ENCODE measurements at regions of chr19 and their contacts with region 1.

Region 1: DNA sequence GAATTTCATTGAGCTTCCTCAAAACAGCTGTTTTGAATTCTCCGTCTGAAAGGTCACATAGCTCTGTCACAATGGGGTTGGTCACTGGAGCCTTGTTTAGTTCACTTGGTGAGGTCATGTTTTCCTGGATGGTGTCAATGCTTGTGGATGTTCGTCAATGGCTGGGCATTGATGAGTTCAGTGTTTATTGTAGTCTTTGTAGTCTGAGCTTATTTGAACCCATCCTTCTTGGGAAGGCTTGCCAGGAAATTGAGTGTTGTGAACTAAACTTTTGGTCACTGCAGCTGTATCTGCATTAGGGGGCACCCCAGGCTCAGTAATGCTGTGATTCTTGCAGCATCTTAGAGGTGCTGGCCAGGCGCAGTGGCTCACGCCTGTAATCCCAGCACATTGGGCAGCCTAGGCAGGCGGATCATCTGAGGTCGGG is 22.0 kb downstream of the BLOC1S3 start:
- DNase-seq: no peak
- ATAC-seq: peak in 1 of 4 donors; percentile 60
- H3K4me3 ChIP-seq: no peak overlapping the region
- H3K27ac ChIP-seq: no peak overlapping the region
- H3K4me1 ChIP-seq: no peaks in the 10 kb centered on the region
- H3K27me3 ChIP-seq: peaks cover 0 to 1% (median 0%) of the 10 kb centered on the region in 3 donors
- CTCF ChIP-seq: peak; percentile 38

Region 2: DNA sequence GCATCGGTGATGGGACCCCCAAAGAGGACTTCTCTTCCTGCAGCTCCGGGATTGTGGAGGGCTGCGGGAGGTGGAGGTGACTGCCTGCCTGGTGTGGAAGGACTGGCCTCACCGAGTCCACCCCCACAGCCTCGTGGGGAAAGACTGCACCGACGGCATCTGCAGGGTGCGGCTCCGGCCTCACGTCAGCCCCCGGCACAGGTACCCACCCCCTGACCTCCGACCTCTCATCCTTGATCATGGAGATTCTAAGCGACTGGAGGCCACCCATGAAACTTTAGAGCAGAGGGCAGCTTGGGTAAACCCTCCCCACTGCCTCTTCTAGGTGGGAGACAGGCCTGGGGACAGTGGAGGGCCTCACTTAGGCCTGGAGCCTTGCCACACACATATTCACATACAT is 178.6 kb before region 1 on chr19:
- intact Hi-C with region 1: no loop called
- DNase-seq: no peak
- ATAC-seq: no peak
- H3K4me3 ChIP-seq: no peak overlapping the region
- H3K27ac ChIP-seq: no peak overlapping the region
- H3K4me1 ChIP-seq: no peaks in the 10 kb centered on the region
- H3K27me3 ChIP-seq: no peaks in the 10 kb centered on the region
- CTCF ChIP-seq: no peak

Region 3: DNA sequence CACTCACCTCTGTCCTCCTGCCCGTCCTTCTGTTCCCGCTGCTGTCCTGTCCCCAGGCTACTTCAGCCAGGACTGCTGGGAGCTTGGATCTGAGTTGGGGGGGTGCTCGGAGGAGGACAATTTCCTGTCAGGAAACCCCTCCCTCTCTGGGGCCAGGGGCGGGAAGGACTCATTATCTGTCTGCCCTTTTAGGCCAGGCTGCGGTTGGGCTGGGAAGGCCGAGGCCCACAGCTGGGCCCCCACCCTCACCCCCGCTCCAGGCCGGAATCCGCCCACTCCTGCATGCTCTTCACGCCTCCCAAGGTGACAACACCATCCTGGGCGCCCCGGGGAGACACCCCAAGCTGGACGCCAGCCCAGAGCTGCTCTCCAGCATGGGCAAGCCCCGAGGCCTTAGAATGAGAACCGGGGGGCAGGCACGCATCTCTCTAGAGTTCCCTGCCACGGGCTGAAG is 44.8 kb after region 1 on chr19 and contains the start of gene EXOC3L2:
- intact Hi-C with region 1: loop called in 1 of 2 experiments (anchors 5 kb)
- DNase-seq: no peak
- ATAC-seq: no peak
- H3K4me3 ChIP-seq: no peak within 1 kb of the TSS
- H3K27ac ChIP-seq: no peak within 1 kb of the TSS
- H3K4me1 ChIP-seq: no peaks in the 10 kb centered on the region
- H3K27me3 ChIP-seq: no peaks in the 10 kb centered on the region
- CTCF ChIP-seq: no peak
- total RNA-seq, gene EXOC3L2: 0.62 to 1.3 (median 0.70) TPM

Region 4: DNA sequence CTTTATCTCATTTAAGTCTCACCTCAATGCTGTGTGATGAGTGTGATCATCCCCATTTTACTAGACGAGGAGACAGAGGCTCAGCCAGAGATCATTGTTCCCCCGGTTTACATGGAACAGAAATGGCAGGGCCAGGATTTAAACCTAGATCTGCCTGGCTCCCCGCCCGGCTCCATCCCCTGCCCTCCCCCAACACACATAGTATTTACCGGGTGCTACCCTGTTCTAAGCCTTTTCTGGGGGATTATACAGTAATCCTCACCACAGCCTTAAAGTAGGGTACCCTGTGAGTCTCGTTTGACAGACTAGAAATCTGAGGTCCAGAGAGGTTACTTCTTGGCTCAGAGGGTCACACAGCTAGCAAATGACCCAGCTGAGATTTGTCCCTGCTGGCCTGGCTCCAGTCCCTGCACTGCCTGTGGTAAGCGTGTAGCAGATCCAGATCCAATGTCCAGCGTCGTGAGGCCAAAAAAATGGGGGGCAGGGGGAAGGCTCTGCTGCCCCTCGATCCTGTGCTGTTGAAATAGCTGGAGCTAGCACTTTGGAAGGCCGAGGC is 136.2 kb after region 1 on chr19:
- intact Hi-C with region 1: loop called (anchors 2 to 10 kb)
- DNase-seq: no peak
- ATAC-seq: no peak
- H3K4me3 ChIP-seq: no peak overlapping the region
- H3K27ac ChIP-seq: no peak overlapping the region
- H3K4me1 ChIP-seq: no peaks in the 10 kb centered on the region
- H3K27me3 ChIP-seq: peaks cover 0 to 29% (median 6%) of the 10 kb centered on the region in 3 donors
- CTCF ChIP-seq: no peak

Region 5: GRCh38 chr19:45352914-45353796 is 152.6 kb after region 1 on chr19:
- intact Hi-C with region 1: no loop called
- DNase-seq: no peak
- ATAC-seq: no peak
- H3K4me3 ChIP-seq: no peak overlapping the region
- H3K27ac ChIP-seq: no peak overlapping the region
- H3K4me1 ChIP-seq: no peaks in the 10 kb centered on the region
- H3K27me3 ChIP-seq: no peaks in the 10 kb centered on the region
- CTCF ChIP-seq: no peak

Measured in psoas muscle (tissue), 8 donors.